AG04449 (cell line): ENCODE measurements at regions of chr2 and their contacts with region 1.

Region 1: GRCh38 chr2:59025157-59025757 is 784.1 kb upstream of the FANCL start:
- DNase-seq: no peak
- H3K4me3 ChIP-seq: no peak overlapping the region
- CTCF ChIP-seq: peak; percentile 91

Region 2: DNA sequence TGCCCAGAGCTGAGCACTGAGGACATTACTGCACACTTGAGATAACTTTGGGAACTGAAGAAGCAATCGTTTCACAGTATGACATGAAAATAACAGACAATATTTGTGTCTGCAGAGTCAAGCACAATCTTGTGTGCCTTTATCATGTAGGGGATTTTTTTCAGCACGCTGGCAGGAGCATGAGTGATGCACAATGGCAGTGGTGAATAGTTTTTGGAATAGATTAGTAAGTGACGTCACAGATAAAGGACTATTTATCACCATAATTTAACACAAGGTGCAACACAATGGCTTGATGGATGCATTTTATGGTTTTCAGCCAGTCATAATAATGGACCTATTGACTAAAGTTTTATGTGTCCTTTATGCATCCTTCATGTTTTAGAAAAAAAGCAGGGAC is 224.4 kb before region 1 on chr2:
- CTCF ChIA-PET with region 1: no interaction called
- POLR2A ChIA-PET with region 1: no interaction called
- DNase-seq: no peak
- H3K4me3 ChIP-seq: no peak overlapping the region
- CTCF ChIP-seq: no peak

Region 3: GRCh38 chr2:58886009-58886408 is 139.2 kb before region 1 on chr2:
- CTCF ChIA-PET with region 1: no interaction called
- POLR2A ChIA-PET with region 1: no interaction called
- DNase-seq: no peak
- H3K4me3 ChIP-seq: no peak overlapping the region
- CTCF ChIP-seq: no peak

Region 4: DNA sequence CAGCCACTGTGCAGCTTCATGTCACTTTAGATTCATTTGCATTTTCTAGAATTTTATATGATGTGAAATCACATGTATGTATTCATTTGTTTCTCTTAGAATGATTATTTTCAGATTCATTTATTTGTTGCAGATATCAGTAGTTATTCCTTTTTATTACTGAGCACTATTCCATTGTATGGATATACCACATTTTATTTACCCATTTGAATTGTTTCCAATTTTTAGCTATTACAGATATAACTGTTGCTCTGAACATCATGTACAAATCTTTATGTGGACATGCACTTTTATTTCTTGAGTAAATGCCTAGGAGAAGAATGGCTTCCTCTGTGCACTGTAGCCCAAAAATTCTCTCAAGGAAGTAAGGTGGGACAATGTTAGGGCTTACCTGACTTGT is 16.3 kb before region 1 on chr2:
- CTCF ChIA-PET with region 1: interaction called, 12 read pairs
- POLR2A ChIA-PET with region 1: no interaction called
- DNase-seq: no peak
- H3K4me3 ChIP-seq: no peak overlapping the region
- CTCF ChIP-seq: no peak

Region 5: DNA sequence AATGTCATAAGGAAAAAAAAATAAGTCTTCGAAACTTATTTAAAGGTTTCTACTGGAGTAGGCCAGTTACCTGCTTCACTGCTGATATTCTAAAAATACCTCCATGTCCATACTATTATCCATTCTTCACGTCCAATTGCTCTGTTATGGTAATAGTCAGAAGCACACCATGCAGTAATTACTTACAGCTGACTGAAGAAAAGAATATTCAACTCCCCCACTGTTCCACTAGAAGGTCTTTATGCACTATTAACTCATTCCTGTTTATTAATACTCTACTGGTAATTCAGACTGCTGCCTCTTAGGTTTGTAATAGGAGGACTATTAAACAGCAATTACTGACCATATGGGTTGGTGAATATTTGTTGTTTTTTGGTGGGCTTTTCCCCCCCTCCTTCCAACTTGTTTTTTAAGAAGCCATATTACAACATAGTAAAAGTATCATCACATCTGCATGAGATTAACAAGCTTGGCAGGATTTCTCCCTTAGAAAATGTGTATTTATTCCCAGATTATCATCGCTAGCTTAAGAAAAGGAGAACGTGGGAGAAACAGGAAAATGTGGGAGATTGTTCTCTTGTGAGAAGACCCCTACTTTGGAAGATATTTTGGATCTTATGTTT is 22.2 kb after region 1 on chr2:
- CTCF ChIA-PET with region 1: interaction called, 10 read pairs
- POLR2A ChIA-PET with region 1: no interaction called
- DNase-seq: no peak
- H3K4me3 ChIP-seq: no peak overlapping the region
- CTCF ChIP-seq: no peak

Region 6: DNA sequence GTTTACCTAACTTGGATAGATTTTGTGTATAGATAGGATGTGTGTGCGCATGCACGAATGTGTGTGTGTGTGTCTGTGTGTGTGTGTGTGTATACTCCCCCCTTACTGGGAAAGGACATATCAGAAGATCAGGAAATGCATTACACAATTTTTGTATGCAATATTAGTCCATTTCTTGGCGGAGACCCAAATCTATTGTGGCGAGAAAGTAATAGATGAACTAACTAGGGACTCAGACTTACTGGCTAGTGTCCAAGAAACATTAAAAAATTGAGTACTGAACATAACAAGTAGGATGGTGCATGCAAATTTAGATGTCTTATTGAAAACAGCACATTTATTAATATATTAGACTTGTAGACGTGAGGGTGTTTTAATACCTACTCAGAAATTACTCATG is 252.4 kb after region 1 on chr2:
- CTCF ChIA-PET with region 1: no interaction called
- POLR2A ChIA-PET with region 1: no interaction called
- DNase-seq: no peak
- H3K4me3 ChIP-seq: no peak overlapping the region
- CTCF ChIP-seq: no peak

Region 7: DNA sequence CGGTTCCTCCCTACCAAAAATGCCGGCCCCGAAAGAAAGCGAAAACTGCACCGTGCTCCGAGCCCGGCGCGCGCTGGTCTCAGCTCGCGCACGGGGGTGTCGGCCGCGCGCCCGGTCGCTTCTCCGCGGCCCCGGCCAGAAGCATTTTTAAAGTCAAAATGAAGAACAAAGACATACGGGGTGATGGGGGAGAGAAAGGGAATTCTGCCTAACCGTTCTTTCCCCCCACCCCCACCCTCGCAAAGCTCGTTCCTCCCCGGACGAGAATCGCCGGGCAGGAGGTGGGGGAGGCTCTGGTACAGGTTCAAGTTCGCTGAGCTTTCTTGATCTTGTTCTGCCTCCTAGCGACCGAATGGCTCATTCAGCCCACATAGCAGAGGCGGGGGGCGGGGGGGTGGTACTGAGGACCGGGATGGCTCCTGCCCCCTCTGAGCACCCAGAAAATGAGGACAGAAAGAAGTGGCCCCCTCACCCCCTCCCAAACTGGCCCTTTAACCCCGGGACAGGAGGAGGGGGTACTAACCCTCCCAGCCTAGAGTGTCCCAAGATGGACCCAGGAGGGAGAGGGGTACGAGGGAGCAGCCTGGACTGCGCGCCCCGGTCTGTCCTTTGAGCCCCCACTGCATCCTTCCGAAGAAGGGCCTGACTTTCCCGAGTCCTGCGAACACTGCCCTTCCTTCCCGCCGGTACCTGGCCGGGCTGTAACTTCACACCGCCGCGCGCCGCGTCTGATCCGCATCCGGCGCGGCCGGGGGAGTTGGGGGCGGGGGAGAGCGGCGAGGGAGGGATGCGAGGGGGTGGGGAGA is 1525.1 kb after region 1 on chr2:
- CTCF ChIA-PET with region 1: interaction called, 18 read pairs
- POLR2A ChIA-PET with region 1: no interaction called
- DNase-seq: peak; percentile 47
- H3K4me3 ChIP-seq: peak overlapping the region; percentile 75
- CTCF ChIP-seq: peak; percentile 85

Region 8: GRCh38 chr2:60560734-60561644 is 1535.7 kb after region 1 on chr2:
- CTCF ChIA-PET with region 1: interaction called, 21 read pairs
- POLR2A ChIA-PET with region 1: no interaction called
- DNase-seq: no peak
- H3K4me3 ChIP-seq: no peak overlapping the region
- CTCF ChIP-seq: peak; percentile 53

Region 9: GRCh38 chr2:60581433-60582282 is 1556.4 kb after region 1 on chr2:
- CTCF ChIA-PET with region 1: interaction called, 48 read pairs
- POLR2A ChIA-PET with region 1: no interaction called
- DNase-seq: no peak
- H3K4me3 ChIP-seq: peak overlapping the region; percentile 55
- CTCF ChIP-seq: peak; percentile 97